ENCODE measurements at regions of chrX and their contacts with region 1.

Region 1: DNA sequence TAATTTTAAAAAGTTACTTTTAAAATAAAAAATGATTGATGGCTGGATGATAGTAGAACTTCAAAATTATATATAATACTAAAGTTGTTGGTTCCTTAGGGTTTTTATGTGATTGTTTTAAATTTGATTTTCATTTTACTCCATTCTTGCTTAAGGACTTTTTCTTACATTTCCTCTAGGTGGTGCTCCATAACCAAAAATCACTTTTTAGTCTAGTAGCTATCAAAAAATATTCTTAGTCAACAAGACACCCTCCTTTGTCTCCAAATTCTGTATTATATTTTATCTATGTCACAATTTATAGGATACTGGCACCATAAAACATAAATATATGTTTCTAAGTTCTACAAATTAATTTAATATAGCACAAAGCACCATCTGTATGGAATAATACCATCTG is 67.2 kb upstream of the BRWD3 start:
- DNase-seq: no peak
- H3K4me3 Mint-ChIP-seq: no peak overlapping the region
- H3K27ac Mint-ChIP-seq: no peak overlapping the region
- H3K4me1 Mint-ChIP-seq: no peaks in the 10 kb centered on the region
- H3K27me3 Mint-ChIP-seq: no peaks in the 10 kb centered on the region

Region 2: GRCh38 chrX:81121513-81122382 is 244.9 kb after region 1 on chrX:
- CTCF ChIA-PET with region 1: interaction called, 6 read pairs
- intact Hi-C with region 1: loop called (anchors 1 kb)
- DNase-seq: peak; percentile 91
- H3K4me3 Mint-ChIP-seq: peak overlapping the region; percentile 91
- H3K27ac Mint-ChIP-seq: peak overlapping the region; percentile 85
- H3K4me1 Mint-ChIP-seq: peaks cover 3% of the 10 kb centered on the region
- H3K27me3 Mint-ChIP-seq: no peaks in the 10 kb centered on the region

Region 3: DNA sequence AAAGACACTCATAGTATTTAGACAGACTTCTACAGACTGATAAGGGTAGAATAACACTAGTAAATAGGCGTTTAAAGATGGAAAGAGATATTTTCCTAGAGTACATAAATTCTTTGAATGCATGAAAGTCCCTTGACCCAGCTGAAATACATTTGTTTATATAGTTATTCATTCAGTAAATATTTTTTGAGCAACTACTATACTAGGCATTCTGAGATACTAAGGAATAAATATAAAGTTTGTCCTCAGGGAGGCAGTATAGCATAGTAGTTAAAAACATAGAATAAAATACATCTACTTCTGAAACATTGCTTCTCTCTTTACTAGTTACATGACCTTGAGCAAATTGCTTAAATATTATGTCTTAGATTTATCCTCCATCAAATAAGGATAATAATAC is 297.4 kb after region 1 on chrX:
- CTCF ChIA-PET with region 1: no interaction called
- intact Hi-C with region 1: loop called (anchors 5 kb)
- DNase-seq: no peak
- H3K4me3 Mint-ChIP-seq: no peak overlapping the region
- H3K27ac Mint-ChIP-seq: no peak overlapping the region
- H3K4me1 Mint-ChIP-seq: no peaks in the 10 kb centered on the region
- H3K27me3 Mint-ChIP-seq: no peaks in the 10 kb centered on the region

Region 4: GRCh38 chrX:81195712-81196111 is 318.8 kb after region 1 on chrX:
- CTCF ChIA-PET with region 1: interaction called, 3 read pairs
- intact Hi-C with region 1: loop called (anchors 1 kb)
- DNase-seq: peak; percentile 71
- H3K4me3 Mint-ChIP-seq: no peak overlapping the region
- H3K27ac Mint-ChIP-seq: no peak overlapping the region
- H3K4me1 Mint-ChIP-seq: peaks cover 16% of the 10 kb centered on the region
- H3K27me3 Mint-ChIP-seq: no peaks in the 10 kb centered on the region

Region 5: DNA sequence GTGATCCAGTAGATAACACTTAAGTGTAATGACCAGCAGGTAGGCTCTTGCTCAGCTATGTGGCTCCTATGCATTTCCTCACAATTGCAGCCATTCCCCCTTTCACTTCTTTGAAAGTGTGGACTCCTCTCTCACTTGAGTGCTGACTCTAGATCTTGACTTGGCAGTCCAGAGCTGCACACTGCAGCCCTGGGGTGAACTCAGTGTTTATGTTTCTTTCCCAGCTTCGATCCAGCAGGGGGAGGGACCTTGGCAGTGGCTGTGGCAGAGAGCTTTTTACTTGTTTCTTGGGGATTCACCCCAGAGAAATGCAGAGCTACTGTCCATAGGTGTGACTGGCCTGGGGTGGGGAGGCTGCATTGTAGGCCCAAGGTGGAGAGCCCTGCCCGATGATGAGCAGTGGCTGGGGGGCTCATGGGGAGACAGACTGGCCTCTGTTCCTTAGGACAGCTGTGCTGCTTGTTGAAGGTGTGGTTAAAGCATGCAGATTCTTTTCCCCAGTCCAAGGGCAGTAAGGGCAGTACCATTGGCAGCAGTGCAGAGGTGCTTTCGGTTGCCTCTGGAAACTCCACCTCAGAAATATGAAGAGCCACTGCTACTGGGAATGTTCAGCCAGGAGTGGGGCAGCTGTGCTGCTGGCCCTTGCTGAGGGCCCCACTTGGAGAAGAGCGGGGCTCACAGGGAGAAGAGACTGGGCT is 459.7 kb after region 1 on chrX:
- CTCF ChIA-PET with region 1: no interaction called
- intact Hi-C with region 1: no loop called
- DNase-seq: no peak
- H3K4me3 Mint-ChIP-seq: no peak overlapping the region
- H3K27ac Mint-ChIP-seq: no peak overlapping the region
- H3K4me1 Mint-ChIP-seq: peaks cover 8% of the 10 kb centered on the region
- H3K27me3 Mint-ChIP-seq: no peaks in the 10 kb centered on the region

Region 6: DNA sequence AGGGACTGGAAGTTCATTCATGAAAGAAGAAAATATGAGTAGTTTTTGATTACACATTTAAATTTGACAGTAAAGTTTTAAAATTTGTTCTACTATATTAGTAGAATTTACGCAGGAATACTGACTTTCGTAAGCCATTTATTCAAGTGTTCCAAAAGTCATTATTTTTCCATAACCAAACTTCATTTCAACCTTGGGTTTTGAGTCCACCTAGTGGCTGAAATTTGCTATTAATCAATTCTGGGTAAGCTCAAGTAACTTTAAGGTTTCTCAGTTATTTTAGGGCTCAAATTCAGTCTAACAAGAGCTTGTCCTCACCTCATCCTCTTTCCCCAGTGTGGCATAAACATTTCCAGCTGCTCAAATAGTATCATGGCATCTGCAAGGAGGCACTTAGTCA is 500.5 kb after region 1 on chrX:
- CTCF ChIA-PET with region 1: no interaction called
- intact Hi-C with region 1: loop called (anchors 1 kb)
- DNase-seq: no peak
- H3K4me3 Mint-ChIP-seq: no peak overlapping the region
- H3K27ac Mint-ChIP-seq: no peak overlapping the region
- H3K4me1 Mint-ChIP-seq: no peaks in the 10 kb centered on the region
- H3K27me3 Mint-ChIP-seq: peaks cover 4% of the 10 kb centered on the region

Measured in activated naive CD4-positive, alpha-beta T cell treated with anti-CD3 and anti-CD28 coated beads for 36 hours (primary cell).